Activated naive CD4-positive, alpha-beta T cell treated with anti-CD3 and anti-CD28 coated beads for 36 hours (primary cell): ENCODE measurements at regions of chr20 and their contacts with region 1.

Region 1: GRCh38 chr20:59571551-59572314 is 32.6 kb upstream of the PHACTR3 start:
- DNase-seq: peak; percentile 74
- H3K4me3 Mint-ChIP-seq: peak overlapping the region; percentile 38
- H3K27ac Mint-ChIP-seq: no peak overlapping the region
- H3K4me1 Mint-ChIP-seq: no peaks in the 10 kb centered on the region
- H3K27me3 Mint-ChIP-seq: peaks cover 28% of the 10 kb centered on the region

Region 2: DNA sequence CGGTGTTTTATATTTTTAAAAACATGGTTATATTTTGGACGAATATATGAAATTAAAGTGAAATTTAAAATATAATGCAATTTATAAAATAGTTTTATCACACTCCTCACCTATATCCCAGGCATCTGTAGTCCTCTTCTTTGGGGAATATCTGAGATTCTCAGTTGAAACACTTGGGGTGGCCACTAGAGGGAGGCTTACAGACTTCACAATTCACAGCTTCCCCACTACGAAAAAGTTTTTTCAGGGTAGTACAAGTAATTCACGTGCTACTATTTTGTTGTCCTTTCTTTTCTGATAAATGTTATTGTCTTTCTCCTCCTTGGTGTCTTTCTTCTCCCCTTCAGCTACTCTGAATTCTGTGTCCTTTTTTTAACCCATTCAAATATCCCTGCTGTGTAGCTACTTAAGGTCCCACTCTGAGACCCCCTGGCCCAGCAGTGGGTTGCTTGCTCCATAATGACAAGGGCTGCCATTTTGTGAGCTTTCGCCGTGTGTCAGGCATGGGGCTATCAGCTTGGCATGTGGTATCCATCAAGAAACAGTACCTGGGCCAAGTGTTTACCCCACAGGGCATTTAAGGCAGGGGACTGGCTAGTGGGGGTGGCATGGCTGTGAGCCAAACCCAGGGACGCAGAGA is 11.0 kb before region 1 on chr20:
- CTCF ChIA-PET with region 1: interaction called, 20 read pairs
- intact Hi-C with region 1: no loop called
- DNase-seq: no peak
- H3K4me3 Mint-ChIP-seq: no peak overlapping the region
- H3K27ac Mint-ChIP-seq: no peak overlapping the region
- H3K4me1 Mint-ChIP-seq: no peaks in the 10 kb centered on the region
- H3K27me3 Mint-ChIP-seq: no peaks in the 10 kb centered on the region

Region 3: DNA sequence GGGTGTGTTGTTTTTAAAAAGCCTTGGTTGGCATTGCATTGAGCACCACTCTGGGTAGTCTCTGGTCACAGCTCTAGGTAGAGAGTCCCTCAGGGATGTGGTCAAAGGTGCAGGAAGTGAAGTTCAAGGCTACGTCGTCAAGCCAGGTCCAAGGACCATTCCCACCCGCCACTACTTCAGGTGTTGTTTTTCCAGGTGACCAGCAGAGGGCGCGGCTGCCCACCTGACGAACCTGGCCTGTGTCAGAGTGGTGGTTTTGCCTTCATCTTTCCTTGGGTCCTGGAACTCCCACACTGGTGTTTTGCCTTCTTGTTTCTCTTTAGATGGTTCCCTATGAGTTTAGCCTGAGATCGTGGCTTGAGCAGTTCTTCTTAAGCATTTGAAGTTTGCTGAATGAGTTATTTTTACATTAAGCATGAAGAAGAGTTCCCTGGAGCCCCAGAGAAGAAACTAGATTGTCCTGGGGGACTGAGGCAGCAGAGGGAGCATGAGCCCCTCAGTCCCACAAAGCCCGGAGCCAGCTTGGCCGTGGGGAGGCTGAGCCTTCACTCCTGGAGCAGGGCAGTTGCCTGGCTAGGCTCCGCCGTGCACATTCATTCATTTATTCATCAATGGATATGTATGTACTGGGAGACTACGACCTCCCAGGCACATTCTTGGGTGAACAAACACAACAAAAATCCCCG is 27.0 kb after region 1 on chr20:
- CTCF ChIA-PET with region 1: interaction called, 15 read pairs
- intact Hi-C with region 1: no loop called
- DNase-seq: peak; percentile 55
- H3K4me3 Mint-ChIP-seq: no peak overlapping the region
- H3K27ac Mint-ChIP-seq: no peak overlapping the region
- H3K4me1 Mint-ChIP-seq: no peaks in the 10 kb centered on the region
- H3K27me3 Mint-ChIP-seq: peaks cover 39% of the 10 kb centered on the region

Region 4: DNA sequence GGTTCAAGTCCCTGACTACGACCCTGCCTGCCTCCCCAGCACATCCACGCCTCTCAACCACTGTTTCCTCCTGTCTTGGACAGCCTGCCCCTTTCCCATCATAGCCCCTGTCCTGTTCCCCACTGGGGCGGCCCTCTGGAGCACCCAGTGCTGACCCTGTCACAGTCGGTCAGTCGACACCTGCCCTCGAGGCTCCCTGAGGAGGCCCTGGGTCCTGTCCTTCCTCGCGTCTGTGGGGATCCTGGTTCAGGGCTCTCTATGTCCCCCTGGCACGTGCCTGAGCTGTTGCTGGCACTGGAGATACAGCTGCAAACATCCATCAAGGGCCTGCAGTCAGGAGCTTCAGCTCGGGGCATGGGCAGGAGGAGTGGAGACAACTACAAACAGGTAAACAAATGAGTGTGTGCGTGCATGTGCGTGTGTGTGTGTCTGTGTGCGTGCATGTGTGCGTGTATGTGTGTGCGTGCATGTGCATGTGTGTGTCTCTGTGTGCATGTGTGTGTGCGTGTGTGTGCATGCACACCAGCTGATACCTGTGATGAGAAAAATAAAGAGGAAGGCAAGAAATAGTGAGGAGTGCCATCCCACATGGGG is 165.4 kb after region 1 on chr20:
- CTCF ChIA-PET with region 1: no interaction called
- intact Hi-C with region 1: no loop called
- DNase-seq: no peak
- H3K4me3 Mint-ChIP-seq: no peak overlapping the region
- H3K27ac Mint-ChIP-seq: no peak overlapping the region
- H3K4me1 Mint-ChIP-seq: no peaks in the 10 kb centered on the region
- H3K27me3 Mint-ChIP-seq: peaks cover 6% of the 10 kb centered on the region

Region 5: DNA sequence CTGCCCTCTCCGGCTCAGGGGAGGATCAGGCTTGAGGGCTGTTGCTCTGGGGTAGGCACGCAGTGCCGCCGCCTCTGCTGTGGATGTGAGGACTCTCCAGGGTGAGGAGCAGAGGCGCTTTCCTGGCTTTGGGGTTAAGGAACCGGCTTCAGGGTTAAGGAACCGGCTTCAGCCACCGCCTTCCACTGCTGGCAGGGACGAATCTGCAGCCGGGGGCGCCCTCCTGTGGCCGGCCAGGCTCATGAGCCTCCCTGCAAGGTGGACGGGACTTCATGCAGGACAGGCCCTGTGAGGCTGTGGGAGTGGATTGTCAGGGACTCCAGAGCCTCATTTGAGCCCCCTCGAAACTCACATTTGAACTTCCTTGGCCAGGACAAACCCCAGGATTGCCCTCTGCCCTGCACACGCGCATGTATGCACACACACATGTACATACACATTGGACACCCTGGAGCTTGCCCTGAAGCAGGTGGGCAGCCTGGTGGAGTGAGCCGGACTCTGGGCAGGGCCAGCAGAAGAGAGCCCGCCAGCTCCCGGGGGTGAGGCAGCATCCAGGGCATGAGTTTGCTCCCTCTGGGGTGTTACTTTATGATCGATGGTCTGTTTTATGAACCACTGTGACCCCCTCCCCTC is 179.4 kb after region 1 on chr20:
- CTCF ChIA-PET with region 1: interaction called, 9 read pairs
- intact Hi-C with region 1: loop called (anchors 1 kb)
- DNase-seq: peak; percentile 63
- H3K4me3 Mint-ChIP-seq: no peak overlapping the region
- H3K27ac Mint-ChIP-seq: no peak overlapping the region
- H3K4me1 Mint-ChIP-seq: no peaks in the 10 kb centered on the region
- H3K27me3 Mint-ChIP-seq: peaks cover 9% of the 10 kb centered on the region